ENCODE measurements at regions of chr1 and their contacts with region 1.

Region 1: GRCh38 chr1:71068325-71069240 is 12.3 kb downstream of the ZRANB2 start:
- DNase-seq: no peak
- ATAC-seq: no peak
- H3K4me3 ChIP-seq: no peak overlapping the region
- H3K27ac ChIP-seq: no peak overlapping the region
- H3K4me1 ChIP-seq: no peaks in the 10 kb centered on the region
- H3K27me3 ChIP-seq: no peaks in the 10 kb centered on the region
- CTCF ChIP-seq: no peak

Region 2: DNA sequence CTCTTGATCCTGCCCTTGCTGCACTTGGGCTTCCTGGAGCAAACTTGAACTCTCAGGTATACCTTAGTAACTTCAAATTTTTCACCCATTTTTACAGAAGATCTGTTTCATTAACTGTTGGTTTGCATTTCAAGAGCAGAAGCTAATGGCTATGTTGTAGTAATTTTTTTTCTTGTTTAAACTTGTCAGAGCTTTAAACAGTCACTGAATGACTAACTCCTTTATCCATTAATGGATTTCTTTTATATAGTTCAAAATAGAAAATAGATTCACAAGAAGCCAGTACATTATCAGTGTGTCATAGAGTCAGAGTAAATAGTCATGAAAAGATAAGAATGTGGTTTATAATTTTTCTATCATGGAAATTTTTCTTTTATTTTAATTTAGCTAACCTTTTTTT is 833.9 kb before region 1 on chr1:
- intact Hi-C with region 1: loop called in 1 of 2 experiments (anchors 10 kb)
- DNase-seq: no peak
- ATAC-seq: no peak
- H3K4me3 ChIP-seq: no peak overlapping the region
- H3K27ac ChIP-seq: no peak overlapping the region
- H3K4me1 ChIP-seq: peaks cover 5% of the 10 kb centered on the region
- H3K27me3 ChIP-seq: no peaks in the 10 kb centered on the region
- CTCF ChIP-seq: no peak

Region 3: DNA sequence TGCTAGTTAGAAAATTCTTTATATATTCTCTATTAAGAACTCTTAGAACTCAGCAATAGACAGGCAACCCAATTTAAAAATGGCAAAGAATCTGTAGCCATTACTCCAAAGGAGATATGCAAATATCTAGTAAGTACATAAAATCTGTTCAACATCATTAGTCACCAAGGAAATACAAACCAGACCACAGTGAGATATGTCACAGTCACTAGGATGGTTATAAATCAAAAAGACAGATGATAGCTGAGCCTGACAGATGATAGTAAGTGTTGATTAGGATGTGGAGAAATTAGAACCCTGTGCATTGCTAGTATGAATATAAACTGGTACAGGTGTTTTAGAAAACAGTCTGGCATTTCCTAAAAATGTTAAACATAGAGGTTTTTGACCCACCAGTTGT is 820.8 kb before region 1 on chr1:
- intact Hi-C with region 1: loop called in 1 of 2 experiments (anchors 10 kb)
- DNase-seq: no peak
- ATAC-seq: peak in 1 of 4 donors; percentile 27
- H3K4me3 ChIP-seq: no peak overlapping the region
- H3K27ac ChIP-seq: no peak overlapping the region
- H3K4me1 ChIP-seq: no peaks in the 10 kb centered on the region
- H3K27me3 ChIP-seq: no peaks in the 10 kb centered on the region
- CTCF ChIP-seq: no peak

Region 4: DNA sequence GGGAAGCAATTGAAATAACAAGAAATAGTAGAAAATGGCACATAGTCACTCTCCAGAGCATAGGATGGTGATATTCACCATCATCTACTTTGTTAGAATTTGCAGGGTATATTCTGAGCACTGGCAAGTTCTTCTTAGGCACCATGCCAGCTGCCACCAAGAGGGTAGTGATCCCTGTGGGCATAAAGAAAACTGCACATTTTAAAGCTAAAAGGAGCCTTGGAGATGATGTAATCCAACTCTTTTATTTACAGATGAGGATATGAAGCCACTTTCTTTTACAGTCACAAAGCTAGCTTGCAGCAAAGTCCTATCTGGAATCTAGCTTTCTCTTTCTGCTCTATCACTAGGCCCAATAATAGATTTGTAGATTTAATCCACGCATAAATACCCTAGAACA is 90.0 kb before region 1 on chr1:
- intact Hi-C with region 1: no loop called
- DNase-seq: no peak
- ATAC-seq: no peak
- H3K4me3 ChIP-seq: no peak overlapping the region
- H3K27ac ChIP-seq: no peak overlapping the region
- H3K4me1 ChIP-seq: no peaks in the 10 kb centered on the region
- H3K27me3 ChIP-seq: no peaks in the 10 kb centered on the region
- CTCF ChIP-seq: no peak

Region 5: GRCh38 chr1:71049951-71050598 is 18.5 kb before region 1 on chr1:
- intact Hi-C with region 1: no loop called
- DNase-seq: no peak
- ATAC-seq: peak; percentile 50 to 78 (median 66)
- H3K4me3 ChIP-seq: no peak overlapping the region
- H3K27ac ChIP-seq: no peak overlapping the region
- H3K4me1 ChIP-seq: peaks cover 7% of the 10 kb centered on the region
- H3K27me3 ChIP-seq: peaks cover 0 to 38% (median 11%) of the 10 kb centered on the region in 3 donors
- CTCF ChIP-seq: peak; percentile 74

Measured in psoas muscle (tissue), 8 donors.